Pancreas (tissue), 10 donors: ENCODE measurements at regions of chr13 and their contacts with region 1.

Region 1: GRCh38 chr13:91375116-91375729 is 23.2 kb upstream of the GPC5 start:
- DNase-seq: no peak
- ATAC-seq: peak in 3 of 4 donors; percentile 54 to 66 (median 55)
- H3K4me3 ChIP-seq: no peak overlapping the region
- H3K27ac ChIP-seq: no peak overlapping the region
- H3K4me1 ChIP-seq: no peaks in the 10 kb centered on the region
- H3K27me3 ChIP-seq: peaks cover 0 to 3% (median 0%) of the 10 kb centered on the region in 4 donors
- CTCF ChIP-seq: peak in 1 of 4 donors; percentile 10

Region 2: DNA sequence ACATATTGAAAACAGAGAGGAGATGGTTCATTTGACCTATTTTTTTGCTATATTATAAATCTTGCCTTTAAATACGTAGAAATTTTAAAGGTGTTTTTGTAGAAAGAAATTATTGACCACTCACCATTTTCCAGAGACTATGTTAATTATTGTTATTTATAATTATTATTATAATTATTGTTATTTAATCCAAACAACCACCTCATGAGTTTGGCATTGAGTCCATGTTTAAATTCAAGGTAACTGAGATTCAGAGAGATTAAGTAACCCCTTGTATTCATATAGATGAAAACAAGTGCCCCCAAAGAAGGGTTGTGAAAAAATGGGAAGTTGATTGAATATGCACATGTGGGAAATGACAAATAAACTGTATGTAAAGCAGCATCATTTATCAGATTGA is 720.3 kb before region 1 on chr13:
- intact Hi-C with region 1: no loop called
- DNase-seq: no peak
- ATAC-seq: no peak
- H3K4me3 ChIP-seq: no peak overlapping the region
- H3K27ac ChIP-seq: no peak overlapping the region
- H3K4me1 ChIP-seq: no peaks in the 10 kb centered on the region
- H3K27me3 ChIP-seq: no peaks in the 10 kb centered on the region
- CTCF ChIP-seq: no peak

Region 3: DNA sequence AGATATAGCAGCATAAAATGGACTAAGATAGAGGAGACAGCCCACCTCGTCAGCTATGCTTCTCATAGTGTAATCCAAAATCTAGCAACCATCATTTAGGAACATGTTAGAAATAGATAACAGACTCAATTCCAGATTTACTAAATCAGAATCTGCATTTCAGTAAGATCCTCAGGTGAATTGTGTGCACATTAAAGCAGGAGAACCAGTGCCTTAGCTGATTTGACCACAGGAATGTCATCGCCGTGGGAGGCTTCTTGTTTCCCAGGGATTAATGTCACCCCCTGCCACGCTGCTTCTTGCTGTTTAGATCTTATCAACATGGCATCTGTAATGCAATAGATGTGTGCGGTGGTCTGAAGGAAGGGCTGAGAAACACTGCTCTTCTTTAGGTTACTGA is 107.2 kb after region 1 on chr13:
- intact Hi-C with region 1: no loop called
- DNase-seq: no peak
- ATAC-seq: no peak
- H3K4me3 ChIP-seq: no peak overlapping the region
- H3K27ac ChIP-seq: no peak overlapping the region
- H3K4me1 ChIP-seq: no peaks in the 10 kb centered on the region
- H3K27me3 ChIP-seq: peaks cover 0 to 7% (median 0%) of the 10 kb centered on the region in 4 donors
- CTCF ChIP-seq: no peak

Region 4: GRCh38 chr13:91722267-91722884 is 347.2 kb after region 1 on chr13:
- intact Hi-C with region 1: loop called in 1 of 3 experiments (anchors 10 kb)
- DNase-seq: no peak
- ATAC-seq: peak in 1 of 4 donors; percentile 41
- H3K4me3 ChIP-seq: no peak overlapping the region
- H3K27ac ChIP-seq: no peak overlapping the region
- H3K4me1 ChIP-seq: no peaks in the 10 kb centered on the region
- H3K27me3 ChIP-seq: no peaks in the 10 kb centered on the region
- CTCF ChIP-seq: peak; percentile 36 to 63 (median 52)

Region 5: GRCh38 chr13:92158346-92158745 is 783.1 kb after region 1 on chr13:
- intact Hi-C with region 1: no loop called
- DNase-seq: no peak
- ATAC-seq: no peak
- H3K4me3 ChIP-seq: no peak overlapping the region
- H3K27ac ChIP-seq: no peak overlapping the region
- H3K4me1 ChIP-seq: no peaks in the 10 kb centered on the region
- H3K27me3 ChIP-seq: no peaks in the 10 kb centered on the region
- CTCF ChIP-seq: no peak